ENCODE measurements at regions of chr15 and their contacts with region 1.

Region 1: GRCh38 chr15:75327005-75327404 is 8.9 kb upstream of the COMMD4 start:
- DNase-seq: no peak
- ATAC-seq: peak; percentile 72
- H3K4me3 ChIP-seq: no peak overlapping the region
- H3K27ac ChIP-seq: no peak overlapping the region
- H3K4me1 ChIP-seq: no peaks in the 10 kb centered on the region
- H3K27me3 ChIP-seq: no peaks in the 10 kb centered on the region
- CTCF ChIP-seq: peak in 2 of 3 experiments; percentile 19 to 39; a peak in 2 of 6 replicates
- POLR2A ChIP-seq: no peak
- RAD21 ChIP-seq: no peak

Region 2: DNA sequence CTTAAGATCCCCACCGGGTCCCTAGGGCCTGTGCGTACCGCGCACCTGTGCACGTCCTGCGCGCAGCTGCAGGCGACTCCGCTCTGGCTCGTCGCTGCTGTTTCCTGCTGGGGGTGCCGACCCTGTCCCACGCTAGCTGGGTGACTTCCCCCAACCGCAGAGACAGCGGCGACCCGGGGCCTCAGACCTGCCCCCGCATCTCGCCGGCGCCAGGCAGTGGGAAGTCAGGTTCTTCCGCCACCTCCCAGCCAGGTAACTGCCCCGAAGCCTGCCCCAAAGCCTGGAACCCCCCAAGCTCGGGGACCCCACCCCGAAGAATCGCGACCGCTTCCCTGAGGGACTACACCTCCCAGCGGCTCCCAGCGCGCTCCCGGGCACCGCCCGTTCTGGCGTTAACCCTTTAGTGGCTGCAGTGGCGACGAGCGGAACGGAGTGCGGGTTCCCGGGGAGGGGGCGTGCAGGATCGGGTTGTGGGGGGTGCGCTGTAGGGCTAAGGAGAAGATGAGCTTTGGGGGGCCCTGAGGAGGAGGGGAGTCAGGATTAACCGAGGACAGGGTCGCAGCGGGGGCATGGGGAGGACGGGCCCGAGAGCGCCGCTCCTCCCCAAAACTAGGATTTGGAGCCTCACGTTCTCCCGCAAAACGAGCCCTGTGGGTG is 20.3 kb after region 1 on chr15:
- CTCF ChIA-PET with region 1: no interaction called
- POLR2A ChIA-PET with region 1: no interaction called
- RAD21 ChIA-PET with region 1: no interaction called
- intact Hi-C with region 1: loop called (anchors 2 kb)
- DNase-seq: peak; percentile 16
- ATAC-seq: peak; percentile 70
- H3K4me3 ChIP-seq: peak overlapping the region; percentile 78 to 87
- H3K27ac ChIP-seq: peak overlapping the region; percentile 85
- H3K4me1 ChIP-seq: peaks cover 6 to 15% of the 10 kb centered on the region in 2 experiments; a peak in 3 of 4 replicates
- H3K27me3 ChIP-seq: no peaks in the 10 kb centered on the region
- CTCF ChIP-seq: no peak
- POLR2A ChIP-seq: no peak
- RAD21 ChIP-seq: no peak

Region 3: GRCh38 chr15:75554717-75555116 is 227.7 kb after region 1 on chr15:
- CTCF ChIA-PET with region 1: no interaction called
- POLR2A ChIA-PET with region 1: no interaction called
- RAD21 ChIA-PET with region 1: no interaction called
- intact Hi-C with region 1: no loop called
- DNase-seq: no peak
- ATAC-seq: no peak
- H3K4me3 ChIP-seq: no peak overlapping the region
- H3K27ac ChIP-seq: no peak overlapping the region
- H3K4me1 ChIP-seq: no peaks in the 10 kb centered on the region
- H3K27me3 ChIP-seq: no peaks in the 10 kb centered on the region
- CTCF ChIP-seq: no peak
- POLR2A ChIP-seq: no peak
- RAD21 ChIP-seq: no peak

Measured in HCT116 (cell line).